ENCODE measurements at regions of chr17 and their contacts with region 1.

Region 1: GRCh38 chr17:82030470-82031302 is 792 bp upstream of the RAC3 start:
- DNase-seq: peak; percentile 70 to 97
- H3K4me3 ChIP-seq: peak overlapping the region; percentile 54 to 80 (median 56)
- H3K27ac ChIP-seq: no peak overlapping the region
- H3K4me1 ChIP-seq: peaks cover 0 to 13% (median 2%) of the 10 kb centered on the region in 4 experiments; a peak in 5 of 7 replicates
- H3K27me3 ChIP-seq: no peaks in the 10 kb centered on the region
- CTCF ChIP-seq: peak; percentile 96 to 98 (median 97)
- EP300 ChIP-seq: no peak
- POLR2A ChIP-seq: 0 out of 3 replicates have a peak, but pooled peaks of 1 of the 2 experiments have one; percentile 38
- RAD21 ChIP-seq: peak; percentile 97

Region 2: DNA sequence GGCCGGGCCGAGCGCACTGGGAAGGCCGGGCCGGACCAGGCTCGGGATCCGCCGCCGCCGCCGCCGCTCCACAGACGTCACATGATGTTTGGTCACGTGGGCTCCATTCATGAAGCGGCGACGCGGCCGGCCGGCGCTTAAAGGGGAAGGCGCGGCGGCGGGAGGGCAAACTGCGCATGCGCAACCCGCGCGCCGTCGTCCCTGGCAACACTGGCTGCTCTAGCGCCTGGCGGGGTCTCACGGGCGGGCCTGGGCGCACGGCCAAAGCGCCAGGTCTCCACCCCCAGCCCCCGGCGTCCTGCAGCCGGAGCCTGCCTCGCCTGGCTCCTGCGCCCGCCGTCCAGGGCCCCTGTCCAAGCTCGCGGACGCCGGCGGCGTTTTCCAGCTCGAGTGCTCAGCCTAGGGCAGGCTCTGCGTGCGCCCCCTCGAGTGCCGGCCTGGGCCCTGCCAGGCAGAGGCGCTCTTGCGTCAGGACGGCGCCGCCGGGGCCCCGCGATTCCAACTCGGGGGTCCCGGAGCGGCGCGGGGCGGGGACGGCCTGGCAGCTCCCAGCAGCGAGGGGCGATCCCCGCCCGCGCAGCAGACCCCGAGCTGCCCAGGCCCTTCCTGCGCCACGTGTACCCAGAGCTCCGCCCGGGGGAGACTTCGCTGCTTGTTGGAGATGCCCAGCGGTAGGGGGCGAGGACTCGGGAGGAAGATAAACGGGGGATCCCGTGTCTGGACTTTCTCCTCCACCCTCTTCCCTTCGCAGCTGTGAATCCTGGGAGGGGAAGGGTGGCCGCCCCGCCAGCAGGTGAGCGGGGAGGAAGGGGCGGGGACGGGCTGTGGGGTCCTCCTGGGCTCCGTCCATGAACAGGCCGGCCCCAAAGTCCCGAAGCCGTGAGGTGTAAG is 102.8 kb before region 1 on chr17 and contains the start of gene MAFG:
- CTCF ChIA-PET with region 1: interaction called, 10 read pairs
- POLR2A ChIA-PET with region 1: interaction called, 5 read pairs
- DNase-seq: peak; percentile 70 to 95
- H3K4me3 ChIP-seq: peak within 1 kb of the TSS; percentile 67 to 89 (median 70)
- H3K27ac ChIP-seq: peak within 1 kb of the TSS; percentile 72
- H3K4me1 ChIP-seq: peaks cover 0 to 37% (median 28%) of the 10 kb centered on the region in 4 experiments; a peak in 6 of 7 replicates
- H3K27me3 ChIP-seq: peaks cover 0 to 12% (median 9%) of the 10 kb centered on the region in 4 experiments; a peak in 4 of 7 replicates
- CTCF ChIP-seq: peak; percentile 60 to 65 (median 63)
- EP300 ChIP-seq: peak in 1 of 2 experiments; percentile 22; a peak in 1 of 3 replicates
- POLR2A ChIP-seq: no peak
- RAD21 ChIP-seq: peak; percentile 42 to 69
- total RNA-seq, gene MAFG: 26.9 and 27.7 TPM in 2 replicates

Region 3: GRCh38 chr17:81947189-81947588 is 83.5 kb before region 1 on chr17 and contains the start of gene MYADML2:
- CTCF ChIA-PET with region 1: no interaction called
- POLR2A ChIA-PET with region 1: no interaction called
- DNase-seq: no peak
- H3K4me3 ChIP-seq: no peak within 1 kb of the TSS
- H3K27ac ChIP-seq: no peak within 1 kb of the TSS
- H3K4me1 ChIP-seq: peaks cover 0 to under 1% (median under 1%) of the 10 kb centered on the region in 4 experiments; a peak in 3 of 7 replicates
- H3K27me3 ChIP-seq: peaks cover 0 to 5% (median under 1%) of the 10 kb centered on the region in 4 experiments; a peak in 3 of 7 replicates
- CTCF ChIP-seq: no peak
- EP300 ChIP-seq: no peak
- POLR2A ChIP-seq: no peak
- RAD21 ChIP-seq: no peak
- total RNA-seq, gene MYADML2: 0.17 and 0.26 TPM in 2 replicates

Region 4: DNA sequence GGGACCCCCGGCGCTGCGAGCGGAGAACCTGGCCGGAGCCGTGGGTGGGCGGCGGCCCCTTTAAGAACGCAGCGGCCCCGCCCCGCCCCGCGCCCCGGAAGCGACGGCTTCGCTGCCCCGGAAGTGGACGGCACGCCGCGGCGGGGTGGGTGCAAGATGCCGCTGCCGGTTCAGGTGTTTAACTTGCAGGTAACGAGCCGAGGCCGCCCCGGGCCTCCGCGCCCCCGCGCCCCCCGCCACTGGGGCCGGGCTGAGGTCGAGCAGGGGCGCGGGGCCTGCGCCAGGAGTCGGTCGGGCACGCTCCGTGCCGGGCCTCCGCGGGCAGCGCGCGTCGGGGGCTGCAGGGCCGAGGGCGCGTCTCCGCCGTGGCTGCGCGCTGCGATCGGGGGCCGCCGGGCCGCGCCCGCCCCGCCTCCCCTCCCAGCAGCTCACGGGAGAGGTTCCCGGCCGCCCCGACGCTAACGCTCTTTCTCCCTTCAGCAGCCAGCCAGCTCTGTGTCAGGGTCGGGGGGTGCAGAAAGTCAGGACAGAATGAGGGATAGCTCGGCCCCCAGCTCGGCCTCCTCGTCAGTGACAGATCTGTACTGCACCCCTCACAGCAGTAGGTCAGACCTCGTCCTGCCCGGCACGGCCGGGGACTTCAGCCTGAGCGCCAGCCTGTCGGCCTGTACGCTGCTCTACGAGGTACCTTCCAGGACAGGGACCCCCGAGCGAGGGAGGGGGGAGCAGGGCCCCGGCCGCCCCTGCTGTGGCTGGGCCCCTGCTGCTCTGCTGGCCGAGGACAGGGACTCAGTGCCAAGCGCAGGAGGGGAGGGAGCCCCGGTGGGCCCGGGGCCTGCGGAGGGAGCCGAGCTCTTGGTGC is 21.3 kb after region 1 on chr17 and contains the starts of genes GPS1 and RFNG:
- CTCF ChIA-PET with region 1: interaction called, 40 read pairs
- POLR2A ChIA-PET with region 1: interaction called, 38 read pairs
- DNase-seq: peak in 1 of 2 experiments; percentile 86
- H3K4me3 ChIP-seq: peak within 1 kb of the TSS; percentile 72 to 94 (median 86)
- H3K27ac ChIP-seq: no peak within 1 kb of the TSS
- H3K4me1 ChIP-seq: peaks cover 0 to 11% (median 6%) of the 10 kb centered on the region in 4 experiments; a peak in 5 of 7 replicates
- H3K27me3 ChIP-seq: no peaks in the 10 kb centered on the region; a peak in 1 of 7 replicates
- CTCF ChIP-seq: no peak
- EP300 ChIP-seq: no peak
- POLR2A ChIP-seq: no peak; a peak in 1 of 3 replicates
- RAD21 ChIP-seq: no peak
- total RNA-seq, gene GPS1: 153 and 157 TPM in 2 replicates
- total RNA-seq, gene RFNG: 26.7 and 30.9 TPM in 2 replicates

Region 5: DNA sequence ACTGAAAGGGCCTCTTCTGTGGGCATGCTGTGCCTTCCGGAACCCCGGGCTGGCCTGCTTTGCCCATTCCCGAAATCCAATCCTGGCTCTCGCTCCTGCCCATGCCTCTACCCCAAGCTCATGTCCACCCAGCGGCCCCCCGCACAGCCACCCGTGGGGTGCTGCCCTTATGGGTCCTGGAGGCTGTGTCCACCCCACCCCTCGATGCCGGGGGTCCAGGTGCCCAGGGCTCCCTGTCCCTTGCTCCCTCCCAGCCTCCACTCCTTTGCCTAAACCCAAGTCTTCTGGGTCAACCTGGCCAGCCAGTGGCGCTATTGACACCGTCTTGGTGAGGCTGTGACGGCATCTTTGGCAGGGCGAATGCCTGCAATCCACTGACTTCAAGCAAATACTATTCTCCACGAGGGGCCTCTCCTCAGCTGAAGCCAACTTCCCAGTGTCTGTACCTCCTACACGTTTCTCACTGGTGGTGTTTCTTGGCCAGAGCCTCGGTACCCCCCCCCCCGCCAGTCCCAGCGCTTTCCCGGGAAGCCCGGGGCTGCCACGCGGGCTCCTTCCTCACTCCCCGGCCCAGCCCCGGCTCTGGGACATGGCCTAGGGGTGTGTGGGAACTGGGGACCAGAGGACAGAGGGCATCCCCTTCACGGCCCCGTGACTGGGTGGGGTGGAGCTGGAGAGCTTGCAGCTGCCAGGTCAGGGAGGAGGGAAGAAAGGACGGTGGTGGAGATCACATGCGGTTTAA is 47.1 kb after region 1 on chr17:
- CTCF ChIA-PET with region 1: interaction called, 16 read pairs
- POLR2A ChIA-PET with region 1: interaction called, 7 read pairs
- DNase-seq: no peak
- H3K4me3 ChIP-seq: no peak overlapping the region
- H3K27ac ChIP-seq: no peak overlapping the region
- H3K4me1 ChIP-seq: no peaks in the 10 kb centered on the region
- H3K27me3 ChIP-seq: no peaks in the 10 kb centered on the region; a peak in 1 of 7 replicates
- CTCF ChIP-seq: peak; percentile 26 to 44 (median 33)
- EP300 ChIP-seq: no peak
- POLR2A ChIP-seq: no peak
- RAD21 ChIP-seq: peak in 1 of 2 experiments; percentile 39; a peak in 3 of 4 replicates

Region 6: DNA sequence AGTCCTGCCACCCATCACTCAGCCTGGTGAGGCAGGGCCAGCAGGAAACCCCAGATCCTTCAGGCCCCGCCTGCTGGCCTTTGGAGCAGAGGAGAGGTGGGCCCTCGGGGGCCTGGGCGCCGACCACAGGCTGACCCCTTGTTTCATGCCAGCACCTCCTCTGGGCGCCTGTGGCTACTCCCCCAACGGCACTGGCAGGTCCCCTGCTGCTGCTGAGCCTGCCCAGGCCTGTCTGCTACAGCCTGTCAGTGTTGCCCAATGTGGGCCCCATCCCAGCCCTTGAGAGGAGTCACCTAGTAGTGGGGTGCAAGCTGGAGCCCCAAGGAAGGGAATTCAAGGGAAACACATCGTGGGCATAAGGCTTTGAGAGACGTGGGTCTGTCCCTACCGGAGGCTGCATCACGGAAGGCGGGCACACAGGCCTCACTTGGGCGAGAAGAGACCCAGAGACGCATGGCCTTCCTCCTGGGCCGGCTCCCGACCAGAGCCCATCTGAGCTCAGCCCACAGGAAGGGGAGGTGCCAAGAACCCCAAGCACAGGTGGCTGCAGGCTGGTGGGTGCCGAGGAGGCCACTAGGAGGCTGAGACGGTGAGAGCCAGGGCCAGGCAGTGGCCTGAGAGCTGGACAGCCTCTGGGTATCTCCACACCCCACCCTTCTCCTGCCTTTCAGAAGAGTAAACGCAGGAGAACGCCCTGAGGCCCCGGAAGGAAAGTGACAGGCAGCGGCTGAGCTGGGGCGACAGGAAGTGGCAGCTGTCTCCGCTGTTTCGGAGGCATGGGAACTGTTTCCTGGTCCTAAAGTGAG is 75.4 kb after region 1 on chr17:
- CTCF ChIA-PET with region 1: interaction called, 13 read pairs
- POLR2A ChIA-PET with region 1: interaction called, 10 read pairs
- DNase-seq: peak; percentile 43 to 79
- H3K4me3 ChIP-seq: no peak overlapping the region
- H3K27ac ChIP-seq: no peak overlapping the region
- H3K4me1 ChIP-seq: peaks cover 0 to 49% (median 42%) of the 10 kb centered on the region in 4 experiments; a peak in 6 of 7 replicates
- H3K27me3 ChIP-seq: no peaks in the 10 kb centered on the region
- CTCF ChIP-seq: peak; percentile 67 to 70 (median 69)
- EP300 ChIP-seq: no peak
- POLR2A ChIP-seq: no peak; a peak in 1 of 3 replicates
- RAD21 ChIP-seq: peak; percentile 35 to 53